ENCODE measurements at regions of chr1 and their contacts with region 1.

Region 1: DNA sequence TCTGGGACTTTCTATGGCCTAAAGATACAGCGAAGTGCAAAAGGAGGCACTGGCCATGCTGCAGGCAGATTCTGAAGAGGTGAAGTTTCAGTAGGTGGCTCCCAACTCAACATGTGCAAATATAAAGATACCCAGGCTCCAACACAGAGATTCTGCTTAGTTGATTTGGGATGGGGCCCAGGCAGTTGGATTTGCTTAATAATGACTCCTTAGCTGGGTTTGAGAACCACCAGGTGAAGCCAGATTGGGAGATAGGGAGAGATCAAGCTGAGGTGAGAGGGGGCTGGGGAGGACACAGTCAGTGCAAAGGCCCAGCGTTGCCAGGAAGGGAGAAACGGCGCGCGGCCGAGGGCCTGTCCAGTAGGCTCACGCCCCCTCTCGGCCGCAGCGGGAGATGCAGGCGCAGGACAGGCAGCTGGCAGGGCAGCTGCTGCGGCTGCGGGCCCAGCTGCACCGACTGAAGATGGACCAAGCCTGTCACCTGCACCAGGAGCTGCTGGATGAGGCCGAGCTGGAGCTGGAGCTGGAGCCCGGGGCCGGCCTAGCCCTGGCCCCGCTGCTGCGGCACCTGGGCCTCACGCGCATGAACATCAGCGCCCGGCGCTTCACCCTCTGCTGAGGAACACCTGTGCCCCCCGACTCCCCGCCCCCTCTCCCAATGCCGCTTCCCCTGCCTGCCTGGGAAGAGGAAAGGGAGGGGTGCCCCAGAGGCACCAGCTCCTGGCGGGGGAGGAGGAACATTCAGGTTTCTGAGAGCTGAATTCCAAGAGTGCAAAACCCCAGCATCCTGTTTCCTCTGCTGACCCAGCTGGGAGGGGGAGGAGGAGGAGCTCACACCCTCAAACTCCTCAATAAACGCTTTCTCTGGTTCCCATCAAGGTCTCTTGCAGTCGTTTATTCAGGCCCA is 1.2 kb downstream of the FAM167B start:
- DNase-seq: peak; percentile 91
- ATAC-seq: peak; percentile 11
- H3K4me3 Mint-ChIP-seq: peak overlapping the region; percentile 33
- H3K27ac Mint-ChIP-seq: peak overlapping the region; percentile 100
- H3K4me1 Mint-ChIP-seq: peaks cover 44% of the 10 kb centered on the region
- H3K27me3 Mint-ChIP-seq: no peaks in the 10 kb centered on the region

Region 2: DNA sequence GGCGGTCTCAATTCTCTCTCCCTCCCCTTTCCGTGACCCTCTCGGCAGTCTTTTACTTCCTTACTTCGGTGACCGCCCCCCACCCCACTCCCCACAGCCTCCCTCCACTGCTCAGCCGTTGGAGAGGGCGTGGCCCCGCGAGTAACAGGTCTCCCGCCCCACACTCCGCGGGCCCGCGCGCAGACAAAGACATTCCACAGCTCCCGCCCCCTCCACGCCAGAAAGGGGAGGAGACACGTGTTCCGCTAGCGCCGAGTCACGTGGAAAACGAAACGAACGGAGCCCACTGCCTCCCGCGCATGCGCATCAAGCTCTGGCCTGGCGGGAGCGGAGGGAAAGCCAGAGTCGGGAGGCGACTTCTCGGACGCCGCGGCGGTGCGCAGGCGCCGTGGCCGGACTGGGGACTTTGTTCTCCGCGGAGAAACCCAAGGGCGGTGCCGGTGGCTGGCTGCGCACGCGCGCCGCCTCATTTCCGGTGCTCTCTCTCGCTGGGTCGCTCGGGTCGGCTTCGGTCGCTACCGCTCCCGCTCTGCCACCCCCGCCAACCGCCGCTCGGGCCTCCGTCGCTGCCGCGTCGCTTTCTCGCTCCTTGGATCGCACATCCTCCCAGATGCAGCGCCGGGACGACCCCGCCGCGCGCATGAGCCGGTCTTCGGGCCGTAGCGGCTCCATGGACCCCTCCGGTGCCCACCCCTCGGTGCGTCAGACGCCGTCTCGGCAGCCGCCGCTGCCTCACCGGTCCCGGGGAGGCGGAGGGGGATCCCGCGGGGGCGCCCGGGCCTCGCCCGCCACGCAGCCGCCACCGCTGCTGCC is 234.6 kb before region 1 on chr1 and contains the start of gene KHDRBS1:
- CTCF ChIA-PET with region 1: no interaction called
- POLR2A ChIA-PET with region 1: no interaction called
- intact Hi-C with region 1: loop called in 1 of 2 experiments (anchors 1 kb)
- DNase-seq: peak; percentile 99
- ATAC-seq: peak; percentile 90
- H3K4me3 Mint-ChIP-seq: peak within 1 kb of the TSS; percentile 97
- H3K27ac Mint-ChIP-seq: peak within 1 kb of the TSS; percentile 95
- H3K4me1 Mint-ChIP-seq: peaks cover 27% of the 10 kb centered on the region
- H3K27me3 Mint-ChIP-seq: no peaks in the 10 kb centered on the region
- total RNA-seq, gene KHDRBS1: 198 to 206 TPM

Region 3: GRCh38 chr1:32200226-32201010 is 47.8 kb before region 1 on chr1 and contains the start of gene CCDC28B:
- CTCF ChIA-PET with region 1: interaction called, 6 read pairs
- POLR2A ChIA-PET with region 1: interaction called, 4 read pairs
- intact Hi-C with region 1: loop called in 1 of 2 experiments (anchors 1 kb)
- DNase-seq: peak; percentile 77
- ATAC-seq: peak; percentile 53
- H3K4me3 Mint-ChIP-seq: peak within 1 kb of the TSS; percentile 71
- H3K27ac Mint-ChIP-seq: peak within 1 kb of the TSS; percentile 86
- H3K4me1 Mint-ChIP-seq: peaks cover 57% of the 10 kb centered on the region
- H3K27me3 Mint-ChIP-seq: no peaks in the 10 kb centered on the region
- total RNA-seq, gene CCDC28B: 13.0 to 19.3 TPM

Region 4: DNA sequence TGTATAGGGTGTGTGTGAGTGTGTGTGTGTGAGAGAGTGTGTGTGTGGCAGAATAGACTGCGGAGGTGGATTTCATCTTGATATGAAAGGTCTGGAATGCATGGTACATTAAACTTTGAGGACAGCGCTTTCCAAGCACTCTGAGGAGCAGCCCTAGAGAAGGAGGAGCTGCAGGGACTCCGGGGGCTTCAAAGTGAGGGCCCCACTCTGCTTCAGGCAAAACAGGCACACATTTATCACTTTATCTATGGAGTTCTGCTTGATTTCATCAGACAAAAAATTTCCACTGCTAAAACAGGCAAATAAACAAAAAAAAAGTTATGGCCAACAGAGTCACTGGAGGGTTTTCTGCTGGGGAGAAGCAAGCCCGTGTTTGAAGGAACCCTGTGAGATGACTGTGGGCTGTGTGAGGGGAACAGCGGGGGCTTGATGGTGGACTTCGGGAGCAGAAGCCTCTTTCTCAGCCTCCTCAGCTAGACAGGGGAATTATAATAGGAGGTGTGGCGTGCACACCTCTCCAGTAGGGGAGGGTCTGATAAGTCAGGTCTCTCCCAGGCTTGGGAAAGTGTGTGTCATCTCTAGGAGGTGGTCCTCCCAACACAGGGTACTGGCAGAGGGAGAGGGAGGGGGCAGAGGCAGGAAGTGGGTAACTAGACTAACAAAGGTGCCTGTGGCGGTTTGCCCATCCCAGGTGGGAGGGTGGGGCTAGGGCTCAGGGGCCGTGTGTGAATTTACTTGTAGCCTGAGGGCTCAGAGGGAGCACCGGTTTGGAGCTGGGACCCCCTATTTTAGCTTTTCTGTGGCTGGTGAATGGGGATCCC is 25.4 kb after region 1 on chr1:
- CTCF ChIA-PET with region 1: interaction called, 8 read pairs
- POLR2A ChIA-PET with region 1: interaction called, 6 read pairs
- intact Hi-C with region 1: loop called in 1 of 2 experiments (anchors 1 kb)
- DNase-seq: peak; percentile 91
- ATAC-seq: peak; percentile 93
- H3K4me3 Mint-ChIP-seq: peak overlapping the region; percentile 62
- H3K27ac Mint-ChIP-seq: peak overlapping the region; percentile 94
- H3K4me1 Mint-ChIP-seq: peaks cover 58% of the 10 kb centered on the region
- H3K27me3 Mint-ChIP-seq: no peaks in the 10 kb centered on the region

Region 5: GRCh38 chr1:32335790-32336590 is 87.8 kb after region 1 on chr1 and contains the start of gene MARCKSL1:
- CTCF ChIA-PET with region 1: interaction called, 4 read pairs
- POLR2A ChIA-PET with region 1: no interaction called
- intact Hi-C with region 1: loop called in 1 of 2 experiments (anchors 1 kb)
- DNase-seq: peak; percentile 88
- ATAC-seq: peak; percentile 50
- H3K4me3 Mint-ChIP-seq: peak within 1 kb of the TSS; percentile 77
- H3K27ac Mint-ChIP-seq: peak within 1 kb of the TSS; percentile 76
- H3K4me1 Mint-ChIP-seq: peaks cover 52% of the 10 kb centered on the region
- H3K27me3 Mint-ChIP-seq: no peaks in the 10 kb centered on the region
- total RNA-seq, gene MARCKSL1: 27.0 to 29.3 TPM

Measured in activated CD4-positive, alpha-beta T cell treated with anti-CD3 and anti-CD28 coated beads for 36 hours (primary cell).